ENCODE measurements at regions of chr11 and their contacts with region 1.

Region 1: GRCh38 chr11:36376888-36377758 is 81.0 kb downstream of the PRR5L start:
- DNase-seq: peak; percentile 61
- ATAC-seq: peak; percentile 72
- H3K4me3 Mint-ChIP-seq: peak overlapping the region; percentile 85
- H3K27ac Mint-ChIP-seq: peak overlapping the region; percentile 55
- H3K4me1 Mint-ChIP-seq: peaks cover 29% of the 10 kb centered on the region
- H3K27me3 Mint-ChIP-seq: peaks cover 66% of the 10 kb centered on the region

Region 2: GRCh38 chr11:36278531-36279282 is 98.4 kb before region 1 on chr11:
- CTCF ChIA-PET with region 1: no interaction called
- POLR2A ChIA-PET with region 1: no interaction called
- DNase-seq: no peak
- ATAC-seq: no peak
- H3K4me3 Mint-ChIP-seq: no peak overlapping the region
- H3K27ac Mint-ChIP-seq: no peak overlapping the region
- H3K4me1 Mint-ChIP-seq: no peaks in the 10 kb centered on the region
- H3K27me3 Mint-ChIP-seq: no peaks in the 10 kb centered on the region

Region 3: GRCh38 chr11:36354221-36355003 is 22.7 kb before region 1 on chr11:
- CTCF ChIA-PET with region 1: interaction called, 13 read pairs
- POLR2A ChIA-PET with region 1: no interaction called
- DNase-seq: no peak
- ATAC-seq: peak; percentile 29
- H3K4me3 Mint-ChIP-seq: no peak overlapping the region
- H3K27ac Mint-ChIP-seq: no peak overlapping the region
- H3K4me1 Mint-ChIP-seq: peaks cover 43% of the 10 kb centered on the region
- H3K27me3 Mint-ChIP-seq: peaks cover 24% of the 10 kb centered on the region

Region 4: DNA sequence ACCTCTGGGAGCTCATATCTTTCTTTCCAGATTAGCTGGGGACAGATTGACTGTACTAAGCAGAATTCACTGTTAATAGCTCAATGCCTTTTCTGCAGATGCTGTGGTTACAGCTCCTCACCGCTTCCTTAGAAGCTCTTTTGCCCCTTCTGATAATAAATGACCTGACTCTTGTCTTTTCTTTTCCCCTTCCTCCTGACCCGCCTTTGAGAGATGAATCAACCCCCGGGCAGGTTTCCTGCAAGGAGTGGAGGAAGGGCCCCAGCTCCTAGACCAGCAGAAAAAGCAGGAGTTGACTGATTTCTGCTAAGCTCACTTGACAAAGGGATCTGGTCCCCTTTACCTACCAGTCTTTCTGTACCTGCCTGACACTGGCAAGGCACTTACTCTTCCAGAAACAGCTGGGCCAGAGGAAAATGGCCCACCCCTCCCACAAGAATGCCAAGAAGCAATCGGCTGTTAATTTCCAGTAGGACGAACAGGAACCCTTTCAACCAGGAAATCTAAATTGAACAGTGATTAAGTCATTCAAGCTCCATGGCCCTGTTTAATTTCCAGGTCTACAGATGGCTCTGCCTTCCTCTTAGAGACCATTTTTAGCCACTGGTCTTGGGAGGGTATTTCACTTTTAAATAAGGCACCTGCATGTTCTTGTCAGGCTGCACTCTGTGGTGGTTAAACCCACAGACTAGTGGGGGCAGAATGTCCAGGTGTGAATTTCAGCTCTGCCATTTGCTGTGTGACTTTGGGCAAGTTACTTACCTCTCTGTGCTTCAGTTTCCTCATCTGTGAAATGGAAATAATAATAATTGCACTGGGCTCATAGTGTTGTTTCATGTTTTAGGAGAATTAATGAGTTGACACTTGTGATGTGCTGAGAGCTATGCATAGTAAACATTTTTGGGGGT is 13.5 kb before region 1 on chr11:
- CTCF ChIA-PET with region 1: interaction called, 18 read pairs
- POLR2A ChIA-PET with region 1: interaction called, 3 read pairs
- DNase-seq: no peak
- ATAC-seq: no peak
- H3K4me3 Mint-ChIP-seq: no peak overlapping the region
- H3K27ac Mint-ChIP-seq: no peak overlapping the region
- H3K4me1 Mint-ChIP-seq: peaks cover 32% of the 10 kb centered on the region
- H3K27me3 Mint-ChIP-seq: peaks cover 47% of the 10 kb centered on the region

Region 5: DNA sequence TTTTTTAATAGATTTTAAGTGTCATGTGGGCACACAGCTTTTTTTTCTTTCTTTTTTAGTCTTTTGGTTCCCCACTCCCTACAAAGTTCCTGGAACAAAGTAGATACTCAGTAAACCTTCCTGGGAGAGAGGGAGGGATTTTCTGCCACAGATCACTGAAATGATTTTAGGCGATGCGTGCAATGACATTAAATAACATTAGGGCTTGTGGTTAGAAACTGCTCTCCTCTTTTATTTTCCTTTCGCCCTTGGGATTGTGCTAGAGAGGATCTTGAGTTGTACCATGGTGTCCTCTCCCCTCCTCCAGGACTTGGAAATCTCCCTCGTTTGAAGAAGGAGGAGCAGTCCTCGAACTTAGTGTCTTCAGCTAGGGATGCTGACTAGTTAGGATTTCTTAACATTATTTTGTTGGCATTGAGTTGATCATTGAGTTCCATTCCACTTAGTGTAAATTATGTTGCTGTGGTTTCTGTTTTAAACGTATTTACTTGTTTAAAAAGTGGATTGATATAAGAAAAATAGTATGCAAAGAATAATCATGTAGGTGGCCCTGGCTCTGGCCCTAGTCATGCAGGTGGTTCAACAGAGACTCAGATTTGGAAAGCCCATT is 44.5 kb after region 1 on chr11:
- CTCF ChIA-PET with region 1: interaction called, 14 read pairs
- POLR2A ChIA-PET with region 1: no interaction called
- DNase-seq: no peak
- ATAC-seq: no peak
- H3K4me3 Mint-ChIP-seq: no peak overlapping the region
- H3K27ac Mint-ChIP-seq: no peak overlapping the region
- H3K4me1 Mint-ChIP-seq: peaks cover 33% of the 10 kb centered on the region
- H3K27me3 Mint-ChIP-seq: peaks cover 17% of the 10 kb centered on the region

Region 6: GRCh38 chr11:36432093-36432469 is 55.0 kb after region 1 on chr11:
- CTCF ChIA-PET with region 1: no interaction called
- POLR2A ChIA-PET with region 1: no interaction called
- DNase-seq: no peak
- ATAC-seq: no peak
- H3K4me3 Mint-ChIP-seq: no peak overlapping the region
- H3K27ac Mint-ChIP-seq: no peak overlapping the region
- H3K4me1 Mint-ChIP-seq: no peaks in the 10 kb centered on the region
- H3K27me3 Mint-ChIP-seq: peaks cover 13% of the 10 kb centered on the region